Transverse colon (tissue), 4 donors: ENCODE measurements at regions of chr4 and their contacts with region 1.

Region 1: DNA sequence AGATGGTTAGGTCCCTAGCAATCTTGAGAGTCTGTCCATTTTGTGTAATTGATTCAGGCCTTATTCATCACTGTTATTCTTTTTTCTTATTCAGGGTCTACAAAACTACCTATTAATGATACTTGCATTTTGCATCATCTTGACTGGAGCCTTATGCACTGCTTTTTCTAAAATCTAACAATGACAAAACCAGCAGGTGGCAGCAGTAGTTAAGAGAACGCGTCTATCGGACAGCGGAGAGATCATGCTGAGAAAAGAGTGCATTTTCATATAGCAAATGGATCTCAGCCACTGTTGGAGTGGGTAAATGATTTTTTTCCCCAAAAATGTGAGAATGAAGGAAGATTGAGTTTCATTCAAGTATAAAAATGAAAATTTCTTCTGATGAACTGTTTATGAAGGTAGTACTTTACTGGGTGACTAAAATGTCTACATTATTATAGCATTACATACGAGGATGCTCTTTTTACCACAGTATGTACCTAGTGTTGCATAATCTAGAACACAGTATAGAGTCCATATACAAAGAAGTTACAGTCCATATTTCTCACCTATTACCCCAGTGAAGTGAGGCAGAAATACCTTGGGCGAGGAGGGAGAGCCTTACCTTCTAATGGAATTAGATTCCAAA is 43.2 kb downstream of the TMEM144 start:
- DNase-seq: peak; percentile 33
- H3K4me3 ChIP-seq: no peak overlapping the region
- H3K27ac ChIP-seq: no peak overlapping the region
- H3K4me1 ChIP-seq: peaks cover 0 to 3% (median 0%) of the 10 kb centered on the region in 4 donors
- H3K27me3 ChIP-seq: no peaks in the 10 kb centered on the region
- CTCF ChIP-seq: peak; percentile 34 to 55 (median 42)
- EP300 ChIP-seq: no peak
- POLR2A ChIP-seq: no peak

Region 2: GRCh38 chr4:157978680-157979361 is 274.6 kb before region 1 on chr4:
- in situ Hi-C with region 1: loop called in 2 of 4 experiments (anchors 25 kb)
- intact Hi-C with region 1: no loop called
- DNase-seq: peak; percentile 8
- H3K4me3 ChIP-seq: peak overlapping the region in 1 of 4 donors; percentile 1
- H3K27ac ChIP-seq: no peak overlapping the region
- H3K4me1 ChIP-seq: peaks cover 0 to 7% (median 0%) of the 10 kb centered on the region in 4 donors
- H3K27me3 ChIP-seq: no peaks in the 10 kb centered on the region
- CTCF ChIP-seq: peak; percentile 74 to 85 (median 82)
- EP300 ChIP-seq: no peak
- POLR2A ChIP-seq: no peak

Region 3: GRCh38 chr4:157992038-157992705 is 261.3 kb before region 1 on chr4:
- in situ Hi-C with region 1: loop called in 3 of 4 experiments (anchors 10 to 25 kb)
- intact Hi-C with region 1: loop called (anchors 10 kb)
- DNase-seq: no peak
- H3K4me3 ChIP-seq: peak overlapping the region in 2 of 4 donors; percentile 2 to 39
- H3K27ac ChIP-seq: peak overlapping the region; percentile 37 to 72 (median 52)
- H3K4me1 ChIP-seq: peaks cover 0 to 33% (median 6%) of the 10 kb centered on the region in 4 donors
- H3K27me3 ChIP-seq: no peaks in the 10 kb centered on the region
- CTCF ChIP-seq: peak; percentile 67 to 84 (median 72)
- EP300 ChIP-seq: no peak
- POLR2A ChIP-seq: no peak

Region 4: DNA sequence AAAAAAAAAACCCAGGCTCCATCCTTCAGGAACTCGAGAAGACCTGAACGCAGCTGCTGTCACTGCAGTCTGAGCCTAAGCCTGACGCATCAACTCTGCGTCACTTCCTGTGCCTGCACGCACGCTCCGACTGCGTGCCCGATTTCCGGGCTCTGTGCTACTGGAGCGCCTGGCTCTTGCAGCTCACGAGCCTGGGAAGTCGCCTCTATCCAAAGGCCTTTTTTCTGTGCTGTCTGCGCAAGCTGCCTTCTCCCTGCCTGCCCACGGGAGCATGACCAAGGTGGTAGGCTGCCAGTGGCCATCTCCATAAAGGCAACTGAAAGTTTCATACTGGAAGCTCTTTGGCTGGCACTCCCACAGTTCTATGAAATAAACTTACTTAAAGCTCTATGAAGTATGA is 70.7 kb before region 1 on chr4:
- in situ Hi-C with region 1: loop called in 1 of 4 experiments (anchors 10 kb)
- intact Hi-C with region 1: no loop called
- DNase-seq: no peak
- H3K4me3 ChIP-seq: no peak overlapping the region
- H3K27ac ChIP-seq: no peak overlapping the region
- H3K4me1 ChIP-seq: no peaks in the 10 kb centered on the region
- H3K27me3 ChIP-seq: no peaks in the 10 kb centered on the region
- CTCF ChIP-seq: no peak
- EP300 ChIP-seq: no peak
- POLR2A ChIP-seq: no peak

Region 5: DNA sequence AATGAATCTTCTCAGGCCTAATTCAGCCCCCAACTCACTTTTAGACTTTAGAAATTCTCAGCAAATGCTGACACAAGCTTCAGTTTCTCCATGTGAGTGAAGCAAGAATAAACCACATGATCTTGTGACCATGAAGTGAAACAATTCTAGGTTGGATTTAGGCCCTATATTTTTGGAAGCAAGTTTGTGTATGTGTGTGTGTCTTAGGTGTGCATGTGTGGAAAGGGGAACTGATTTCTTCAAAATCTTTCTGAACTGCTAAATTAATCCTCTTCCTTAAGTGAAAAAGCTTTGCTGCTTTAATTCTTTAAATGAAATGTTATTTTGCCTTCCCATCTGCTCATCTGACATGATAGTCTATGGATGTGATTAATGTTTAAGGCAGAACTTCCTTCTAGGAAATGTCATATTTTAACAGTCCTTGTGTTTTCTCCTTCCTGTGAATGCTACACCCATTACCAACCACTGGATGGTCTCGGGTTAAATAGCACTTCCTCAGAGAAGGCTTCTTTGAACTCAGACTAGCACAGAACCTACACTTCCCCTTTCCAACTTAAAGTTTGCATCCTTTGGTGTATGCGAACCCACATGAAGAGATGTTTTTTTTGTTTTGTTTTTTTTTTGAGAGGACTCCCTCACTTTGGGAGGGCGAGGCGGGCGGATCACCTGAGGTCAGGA is 44.4 kb before region 1 on chr4:
- in situ Hi-C with region 1: no loop called
- intact Hi-C with region 1: no loop called
- DNase-seq: no peak
- H3K4me3 ChIP-seq: no peak overlapping the region
- H3K27ac ChIP-seq: peak overlapping the region; percentile 81 to 91 (median 86)
- H3K4me1 ChIP-seq: peaks cover 0 to 19% (median 10%) of the 10 kb centered on the region in 4 donors
- H3K27me3 ChIP-seq: no peaks in the 10 kb centered on the region
- CTCF ChIP-seq: no peak
- EP300 ChIP-seq: no peak
- POLR2A ChIP-seq: no peak

Region 6: DNA sequence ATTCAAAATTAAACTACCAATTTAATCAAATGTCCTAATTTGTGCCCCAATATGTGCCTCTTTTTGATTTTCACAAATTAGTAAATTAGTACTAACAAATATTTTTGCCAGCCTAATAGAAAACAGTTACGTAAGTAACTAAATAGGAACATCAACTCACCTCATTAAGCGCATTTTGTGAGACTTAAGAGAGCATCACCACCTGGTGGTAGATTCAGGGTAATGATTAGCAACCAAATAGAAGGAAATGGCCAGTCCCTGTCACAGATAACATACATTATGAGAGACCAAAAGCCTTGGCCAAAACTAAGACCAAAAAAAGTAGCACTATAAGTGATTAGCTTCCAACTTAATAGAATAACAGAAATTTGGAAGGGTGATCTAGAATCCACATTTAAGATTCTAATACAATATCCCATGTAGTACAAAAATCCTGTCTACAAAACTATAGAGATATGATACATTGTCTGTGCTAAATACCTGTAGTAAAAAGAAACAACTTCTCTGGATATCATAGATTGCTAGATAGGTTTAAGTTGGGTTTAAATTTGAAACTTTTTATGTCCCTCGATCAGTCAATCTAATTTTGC is 371.5 kb after region 1 on chr4:
- in situ Hi-C with region 1: loop called in 3 of 4 experiments (anchors 5 to 25 kb)
- intact Hi-C with region 1: loop called (anchors 10 kb)
- DNase-seq: no peak
- H3K4me3 ChIP-seq: no peak overlapping the region
- H3K27ac ChIP-seq: no peak overlapping the region
- H3K4me1 ChIP-seq: no peaks in the 10 kb centered on the region
- H3K27me3 ChIP-seq: no peaks in the 10 kb centered on the region
- CTCF ChIP-seq: peak; percentile 59 to 68 (median 61)
- EP300 ChIP-seq: no peak
- POLR2A ChIP-seq: no peak

Region 7: DNA sequence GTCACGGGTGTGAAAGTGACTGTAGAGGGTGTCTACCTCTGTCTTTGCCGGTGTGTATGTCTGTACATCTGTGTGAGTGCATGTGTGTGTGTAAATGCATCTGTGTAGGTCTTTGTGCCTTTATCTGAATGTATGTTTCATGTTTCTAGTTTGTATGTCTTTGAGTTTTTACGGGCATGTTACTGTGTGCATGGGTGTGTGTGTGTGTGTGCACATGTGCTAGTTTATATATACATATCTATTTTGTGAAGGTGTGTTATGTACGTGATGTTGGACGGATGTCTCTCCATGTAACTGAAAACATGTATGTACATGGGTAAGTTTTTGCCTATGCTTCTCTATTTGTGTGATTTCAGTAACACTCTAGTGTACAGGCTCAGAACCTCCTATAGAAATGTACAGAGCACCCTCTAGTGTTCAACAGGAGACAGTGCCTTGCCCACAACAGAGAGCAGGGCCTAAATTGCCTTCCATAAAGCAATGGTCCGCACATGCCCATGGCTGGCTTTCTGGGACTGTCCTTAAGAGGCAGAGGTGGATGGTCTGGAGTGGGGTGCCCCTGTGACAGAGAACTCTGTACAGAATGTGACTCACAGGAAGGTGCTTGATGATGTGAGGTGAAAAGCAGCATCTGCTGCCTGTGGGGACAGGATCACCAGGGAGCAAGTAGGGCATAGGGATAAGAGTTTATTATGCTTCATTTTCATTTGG is 1193.0 kb after region 1 on chr4:
- in situ Hi-C with region 1: no loop called
- intact Hi-C with region 1: loop called (anchors 10 kb)
- DNase-seq: peak; percentile 9
- H3K4me3 ChIP-seq: no peak overlapping the region
- H3K27ac ChIP-seq: no peak overlapping the region
- H3K4me1 ChIP-seq: no peaks in the 10 kb centered on the region
- H3K27me3 ChIP-seq: no peaks in the 10 kb centered on the region
- CTCF ChIP-seq: peak; percentile 60 to 82 (median 77)
- EP300 ChIP-seq: no peak
- POLR2A ChIP-seq: no peak